Naive thymus-derived CD4-positive, alpha-beta T cell (primary cell): ENCODE measurements at regions of chr12 and their contacts with region 1.

Region 1: GRCh38 chr12:89225808-89226411 is 126.4 kb downstream of the DUSP6 start:
- DNase-seq: peak in 1 of 9 donors; percentile 47
- ATAC-seq: peak; percentile 26
- H3K4me3 ChIP-seq: no peak overlapping the region
- H3K4me3 Mint-ChIP-seq: peak overlapping the region in 8 of 10 donors; percentile 26 to 74 (median 54)
- H3K27ac ChIP-seq: no peak overlapping the region
- H3K27ac Mint-ChIP-seq: peak overlapping the region; percentile 38 to 94 (median 63)
- H3K4me1 ChIP-seq: peaks cover 16 to 17% of the 10 kb centered on the region in 2 donors
- H3K4me1 Mint-ChIP-seq: peaks cover 18 to 76% (median 48%) of the 10 kb centered on the region in 7 donors
- H3K27me3 ChIP-seq: no peaks in the 10 kb centered on the region
- H3K27me3 Mint-ChIP-seq: no peaks in the 10 kb centered on the region

Region 2: GRCh38 chr12:89103831-89104230 is 122.1 kb before region 1 on chr12:
- CTCF ChIA-PET with region 1: no interaction called
- POLR2A ChIA-PET with region 1: no interaction called
- intact Hi-C with region 1: no loop called
- DNase-seq: no peak
- ATAC-seq: no peak
- H3K4me3 ChIP-seq: no peak overlapping the region
- H3K4me3 Mint-ChIP-seq: no peak overlapping the region
- H3K27ac ChIP-seq: no peak overlapping the region
- H3K27ac Mint-ChIP-seq: no peak overlapping the region
- H3K4me1 ChIP-seq: no peaks in the 10 kb centered on the region
- H3K4me1 Mint-ChIP-seq: peaks cover 0 to 2% (median 0%) of the 10 kb centered on the region in 7 donors
- H3K27me3 ChIP-seq: no peaks in the 10 kb centered on the region
- H3K27me3 Mint-ChIP-seq: no peaks in the 10 kb centered on the region

Region 3: GRCh38 chr12:89162704-89163261 is 63.1 kb before region 1 on chr12:
- CTCF ChIA-PET with region 1: no interaction called
- POLR2A ChIA-PET with region 1: interaction called, 3 read pairs
- intact Hi-C with region 1: loop called in 1 of 2 experiments (anchors 1 kb)
- DNase-seq: peak in 1 of 9 donors; percentile 54
- ATAC-seq: peak; percentile 77
- H3K4me3 ChIP-seq: no peak overlapping the region
- H3K4me3 Mint-ChIP-seq: no peak overlapping the region
- H3K27ac ChIP-seq: no peak overlapping the region
- H3K27ac Mint-ChIP-seq: no peak overlapping the region
- H3K4me1 ChIP-seq: peaks cover 0 to 9% of the 10 kb centered on the region in 2 donors
- H3K4me1 Mint-ChIP-seq: peaks cover 10 to 31% (median 20%) of the 10 kb centered on the region in 7 donors
- H3K27me3 ChIP-seq: no peaks in the 10 kb centered on the region
- H3K27me3 Mint-ChIP-seq: no peaks in the 10 kb centered on the region

Region 4: DNA sequence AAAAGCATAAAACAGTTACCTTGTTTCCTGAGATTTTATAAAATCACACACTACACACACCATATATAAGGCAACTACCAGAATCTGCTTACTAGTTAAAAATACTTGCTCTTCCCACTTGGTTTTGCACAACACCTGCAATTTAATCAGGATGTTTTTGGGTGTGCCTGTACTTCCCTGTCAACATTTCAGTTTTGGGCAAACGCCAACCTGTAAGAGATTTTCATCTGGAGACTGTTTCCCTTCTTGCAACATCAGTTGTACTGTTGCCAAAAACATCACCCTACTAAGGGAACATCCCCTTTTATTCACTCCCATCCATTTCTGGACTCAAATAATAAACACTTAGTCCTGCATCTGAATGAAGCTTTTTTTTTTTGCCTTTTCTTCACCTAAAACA is 45.9 kb before region 1 on chr12:
- CTCF ChIA-PET with region 1: no interaction called
- POLR2A ChIA-PET with region 1: no interaction called
- intact Hi-C with region 1: loop called in 1 of 2 experiments (anchors 1 kb)
- DNase-seq: no peak
- ATAC-seq: peak; percentile 36
- H3K4me3 ChIP-seq: no peak overlapping the region
- H3K4me3 Mint-ChIP-seq: peak overlapping the region in 1 of 10 donors; percentile 47
- H3K27ac ChIP-seq: no peak overlapping the region
- H3K27ac Mint-ChIP-seq: peak overlapping the region in 1 of 9 donors; percentile 77
- H3K4me1 ChIP-seq: peaks cover 0 to 5% of the 10 kb centered on the region in 2 donors
- H3K4me1 Mint-ChIP-seq: peaks cover 6 to 46% (median 14%) of the 10 kb centered on the region in 7 donors
- H3K27me3 ChIP-seq: no peaks in the 10 kb centered on the region
- H3K27me3 Mint-ChIP-seq: no peaks in the 10 kb centered on the region

Region 5: DNA sequence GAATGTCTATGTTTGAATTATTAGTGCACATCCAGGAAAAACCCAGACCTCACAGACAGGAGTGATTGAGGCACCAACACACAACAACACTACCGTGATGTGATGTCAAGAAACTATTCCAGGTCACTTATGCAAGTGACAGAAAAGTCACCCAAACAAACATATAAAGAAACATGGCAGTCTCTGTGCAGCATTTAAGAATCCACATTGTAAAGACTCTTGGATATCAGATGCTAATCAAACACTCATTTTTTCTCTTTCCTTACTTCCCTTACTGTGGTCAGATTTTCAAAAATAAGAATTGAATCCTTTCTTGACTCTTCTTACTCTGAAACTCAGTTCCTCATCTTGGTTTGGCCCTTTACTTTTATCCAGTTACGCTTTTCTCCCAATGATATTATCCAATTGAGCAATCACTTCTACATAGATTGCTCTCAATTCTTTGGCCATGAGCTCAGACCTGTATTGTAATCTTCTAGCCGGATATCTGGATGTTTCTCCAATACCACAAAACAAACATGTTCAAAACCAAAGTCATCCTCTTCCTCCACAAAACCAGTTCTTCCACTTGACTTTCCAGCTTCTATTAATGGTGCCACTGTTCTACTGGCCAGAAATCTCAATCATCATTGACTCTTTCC is 11.0 kb after region 1 on chr12:
- CTCF ChIA-PET with region 1: no interaction called
- POLR2A ChIA-PET with region 1: interaction called, 3 read pairs
- intact Hi-C with region 1: loop called in 1 of 2 experiments (anchors 1 kb)
- DNase-seq: no peak
- ATAC-seq: no peak
- H3K4me3 ChIP-seq: no peak overlapping the region
- H3K4me3 Mint-ChIP-seq: peak overlapping the region in 7 of 10 donors; percentile 5 to 82 (median 43)
- H3K27ac ChIP-seq: no peak overlapping the region
- H3K27ac Mint-ChIP-seq: peak overlapping the region in 3 of 9 donors; percentile 7 to 25 (median 21)
- H3K4me1 ChIP-seq: peaks cover 18 to 48% of the 10 kb centered on the region in 2 donors
- H3K4me1 Mint-ChIP-seq: peaks cover 52 to 89% (median 77%) of the 10 kb centered on the region in 7 donors
- H3K27me3 ChIP-seq: no peaks in the 10 kb centered on the region
- H3K27me3 Mint-ChIP-seq: no peaks in the 10 kb centered on the region

Region 6: DNA sequence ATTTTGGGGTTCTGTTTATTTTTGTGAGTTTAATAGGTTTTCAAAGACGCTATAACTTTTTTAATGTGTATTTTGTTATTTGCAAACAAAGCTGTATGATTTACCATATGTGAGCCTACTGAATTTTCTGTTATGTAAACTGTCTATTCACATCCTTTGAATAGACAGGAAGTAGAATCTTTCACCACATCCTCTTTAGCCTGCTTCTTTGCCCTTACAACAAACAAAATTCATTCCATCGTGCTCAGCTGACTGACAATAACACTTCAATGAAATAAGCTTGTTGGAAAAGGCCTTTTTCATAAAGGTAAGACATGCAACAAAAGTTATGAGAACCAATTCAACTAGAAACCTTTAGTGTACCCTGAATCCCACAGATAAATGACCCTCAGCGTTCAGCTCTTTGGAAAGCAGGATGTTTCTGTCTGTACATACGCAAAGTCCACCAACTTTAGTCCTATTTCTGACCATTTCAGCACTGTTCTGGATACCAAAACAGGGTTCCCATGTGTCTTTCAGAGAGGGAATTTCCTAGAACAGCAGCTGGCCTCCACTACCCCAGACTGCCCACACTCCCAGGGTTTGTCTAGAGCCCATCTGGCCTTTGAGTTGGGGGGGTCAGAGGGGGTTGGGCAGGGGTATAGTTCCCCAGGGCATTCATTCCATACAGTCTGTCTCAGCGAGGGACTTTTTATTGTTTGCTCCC is 55.1 kb after region 1 on chr12:
- CTCF ChIA-PET with region 1: interaction called, 3 read pairs
- POLR2A ChIA-PET with region 1: interaction called, 3 read pairs
- intact Hi-C with region 1: loop called (anchors 2 kb)
- DNase-seq: peak in 7 of 9 donors; percentile 7 to 79 (median 52)
- ATAC-seq: peak; percentile 90
- H3K4me3 ChIP-seq: peak overlapping the region; percentile 1
- H3K4me3 Mint-ChIP-seq: peak overlapping the region in 8 of 10 donors; percentile 44 to 80 (median 64)
- H3K27ac ChIP-seq: no peak overlapping the region
- H3K27ac Mint-ChIP-seq: peak overlapping the region in 8 of 9 donors; percentile 38 to 89 (median 66)
- H3K4me1 ChIP-seq: peaks cover 18 to 22% of the 10 kb centered on the region in 2 donors
- H3K4me1 Mint-ChIP-seq: peaks cover 15 to 47% (median 37%) of the 10 kb centered on the region in 7 donors
- H3K27me3 ChIP-seq: no peaks in the 10 kb centered on the region
- H3K27me3 Mint-ChIP-seq: no peaks in the 10 kb centered on the region

Region 7: GRCh38 chr12:89461649-89462612 is 236.0 kb after region 1 on chr12:
- CTCF ChIA-PET with region 1: no interaction called
- POLR2A ChIA-PET with region 1: no interaction called
- intact Hi-C with region 1: no loop called
- DNase-seq: peak in 6 of 9 donors; percentile 26 to 68 (median 54)
- ATAC-seq: peak; percentile 95
- H3K4me3 ChIP-seq: no peak overlapping the region
- H3K4me3 Mint-ChIP-seq: peak overlapping the region in 7 of 10 donors; percentile 10 to 81 (median 53)
- H3K27ac ChIP-seq: no peak overlapping the region
- H3K27ac Mint-ChIP-seq: peak overlapping the region in 6 of 9 donors; percentile 5 to 71 (median 41)
- H3K4me1 ChIP-seq: peaks cover 0 to 3% of the 10 kb centered on the region in 2 donors
- H3K4me1 Mint-ChIP-seq: peaks cover 7 to 52% (median 18%) of the 10 kb centered on the region in 7 donors
- H3K27me3 ChIP-seq: no peaks in the 10 kb centered on the region
- H3K27me3 Mint-ChIP-seq: no peaks in the 10 kb centered on the region

Region 8: DNA sequence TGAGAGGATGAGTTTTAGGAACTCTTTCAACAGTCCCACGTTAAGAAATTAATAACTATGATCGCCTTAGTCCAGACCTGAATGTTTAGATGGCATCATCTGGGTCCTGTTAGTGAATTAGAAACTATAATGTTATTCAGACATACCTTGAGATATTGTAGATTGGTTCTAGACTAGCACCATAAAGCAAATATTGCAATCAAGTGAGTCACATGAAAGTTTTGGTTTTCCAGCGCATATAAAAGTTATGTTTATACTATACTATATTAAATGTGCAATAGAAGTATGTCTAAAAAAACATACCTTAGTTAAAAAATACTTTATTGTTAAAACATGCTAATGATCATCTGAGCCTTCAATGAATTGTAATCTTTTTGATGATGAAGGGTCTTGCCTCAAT is 589.3 kb after region 1 on chr12:
- CTCF ChIA-PET with region 1: no interaction called
- POLR2A ChIA-PET with region 1: no interaction called
- intact Hi-C with region 1: no loop called
- DNase-seq: no peak
- ATAC-seq: no peak
- H3K4me3 ChIP-seq: no peak overlapping the region
- H3K4me3 Mint-ChIP-seq: no peak overlapping the region
- H3K27ac ChIP-seq: no peak overlapping the region
- H3K27ac Mint-ChIP-seq: no peak overlapping the region
- H3K4me1 ChIP-seq: no peaks in the 10 kb centered on the region
- H3K4me1 Mint-ChIP-seq: peaks cover 0 to 1% (median 0%) of the 10 kb centered on the region in 7 donors
- H3K27me3 ChIP-seq: no peaks in the 10 kb centered on the region
- H3K27me3 Mint-ChIP-seq: peaks cover 0 to 5% (median 0%) of the 10 kb centered on the region in 5 donors